Activated T-helper 2 cell treated with anti-CD3 and anti-CD28 coated beads, Interferon-gamma antibody, Interleukin-2, Interleukin-4, amounts not matched to agents 10 μg/mL and 5 μg/mL and 100 μg/mL, durations not matched to agents 14 hours and 24 hours and 36 hours (primary cell): ENCODE measurements at regions of chr10 and their contacts with region 1.

Region 1: DNA sequence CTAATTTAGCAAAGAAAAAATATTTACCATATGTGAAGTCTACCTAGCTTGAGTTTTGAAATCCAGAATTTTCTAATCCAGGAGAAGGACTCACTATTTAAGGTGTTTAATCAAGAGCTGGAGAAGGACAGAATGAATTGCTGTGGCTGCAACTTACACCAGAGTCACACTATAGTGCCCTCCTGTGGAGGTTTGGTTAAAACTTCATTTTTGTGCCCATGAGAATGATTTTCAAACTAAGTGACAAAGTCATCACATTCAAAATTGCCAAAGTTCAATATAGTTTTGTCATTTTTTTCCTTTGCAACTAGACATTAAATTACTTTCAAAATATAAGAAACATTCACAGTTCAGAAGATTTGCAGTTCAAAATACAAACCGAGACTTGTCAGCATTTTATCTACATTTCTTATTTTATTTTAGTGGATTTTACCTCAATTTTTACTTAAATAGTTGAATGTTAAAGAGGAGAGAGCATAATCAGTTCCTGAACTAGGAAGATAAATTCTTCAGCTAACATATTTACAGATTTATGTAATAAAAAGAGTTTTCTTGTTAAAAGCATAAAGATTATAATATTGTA is 70.7 kb downstream of the CABCOCO1 start:
- DNase-seq: no peak
- H3K4me3 Mint-ChIP-seq: no peak overlapping the region
- H3K27ac Mint-ChIP-seq: no peak overlapping the region
- H3K4me1 Mint-ChIP-seq: peaks cover 3% of the 10 kb centered on the region
- H3K27me3 Mint-ChIP-seq: peaks cover 67% of the 10 kb centered on the region

Region 2: DNA sequence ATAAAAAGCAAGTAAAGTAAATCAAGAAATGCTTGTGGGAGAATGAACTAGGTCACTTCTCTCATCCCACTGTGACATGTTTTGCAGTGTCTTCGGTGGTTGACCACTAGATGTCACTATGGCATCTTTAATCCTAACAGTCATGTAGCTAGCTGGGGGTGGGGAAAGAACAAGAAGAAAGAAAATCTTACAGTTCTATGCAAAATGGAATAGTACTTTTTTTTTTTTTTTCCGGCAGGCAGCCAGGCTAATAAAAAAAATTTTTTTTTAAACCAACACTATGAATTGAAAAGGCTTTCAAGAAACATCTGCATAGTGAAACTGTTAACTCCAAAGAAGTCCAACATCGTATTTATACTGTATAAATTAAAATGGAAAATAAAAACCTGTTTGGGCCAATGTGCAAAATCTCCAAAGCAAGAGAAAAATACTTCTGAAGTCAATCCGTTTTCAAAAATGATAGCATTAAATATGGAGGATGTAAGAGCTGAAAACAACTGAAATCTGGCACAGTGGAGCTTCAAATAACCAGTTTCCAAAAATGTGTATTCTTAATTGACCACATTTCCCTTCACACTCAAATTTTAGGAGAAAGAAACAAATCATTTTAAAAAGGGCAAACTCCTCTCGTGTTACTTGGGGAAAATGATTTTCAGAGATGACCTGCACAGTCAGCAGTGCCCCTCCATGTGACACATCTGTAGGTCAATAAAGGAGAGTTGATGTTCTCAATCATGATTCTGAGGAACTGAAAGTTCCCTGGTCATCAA is 916.6 kb before region 1 on chr10:
- intact Hi-C with region 1: loop called (anchors 2 kb)
- DNase-seq: no peak
- H3K4me3 Mint-ChIP-seq: no peak overlapping the region
- H3K27ac Mint-ChIP-seq: no peak overlapping the region
- H3K4me1 Mint-ChIP-seq: peaks cover 13% of the 10 kb centered on the region
- H3K27me3 Mint-ChIP-seq: peaks cover 26% of the 10 kb centered on the region